MCF 10A (cell line): ENCODE measurements at regions of chr1 and their contacts with region 1.

Region 1: GRCh38 chr1:48878191-48878940 is 101.7 kb upstream of the BEND5 start:
- DNase-seq: peak; percentile 95
- H3K4me3 Mint-ChIP-seq: peak overlapping the region; percentile 37
- H3K27ac Mint-ChIP-seq: peak overlapping the region; percentile 17
- H3K4me1 Mint-ChIP-seq: peaks cover 17% of the 10 kb centered on the region
- H3K27me3 Mint-ChIP-seq: no peaks in the 10 kb centered on the region
- CTCF ChIP-seq: no peak

Region 2: GRCh38 chr1:48853006-48853405 is 25.4 kb before region 1 on chr1:
- CTCF ChIA-PET with region 1: interaction called, 13 read pairs
- POLR2A ChIA-PET with region 1: interaction called, 5 read pairs
- intact Hi-C with region 1: no loop called
- DNase-seq: peak; percentile 95
- H3K4me3 Mint-ChIP-seq: no peak overlapping the region
- H3K27ac Mint-ChIP-seq: peak overlapping the region; percentile 47
- H3K4me1 Mint-ChIP-seq: peaks cover 6% of the 10 kb centered on the region
- H3K27me3 Mint-ChIP-seq: no peaks in the 10 kb centered on the region
- CTCF ChIP-seq: no peak